ENCODE measurements at regions of chr20 and their contacts with region 1.

Region 1: DNA sequence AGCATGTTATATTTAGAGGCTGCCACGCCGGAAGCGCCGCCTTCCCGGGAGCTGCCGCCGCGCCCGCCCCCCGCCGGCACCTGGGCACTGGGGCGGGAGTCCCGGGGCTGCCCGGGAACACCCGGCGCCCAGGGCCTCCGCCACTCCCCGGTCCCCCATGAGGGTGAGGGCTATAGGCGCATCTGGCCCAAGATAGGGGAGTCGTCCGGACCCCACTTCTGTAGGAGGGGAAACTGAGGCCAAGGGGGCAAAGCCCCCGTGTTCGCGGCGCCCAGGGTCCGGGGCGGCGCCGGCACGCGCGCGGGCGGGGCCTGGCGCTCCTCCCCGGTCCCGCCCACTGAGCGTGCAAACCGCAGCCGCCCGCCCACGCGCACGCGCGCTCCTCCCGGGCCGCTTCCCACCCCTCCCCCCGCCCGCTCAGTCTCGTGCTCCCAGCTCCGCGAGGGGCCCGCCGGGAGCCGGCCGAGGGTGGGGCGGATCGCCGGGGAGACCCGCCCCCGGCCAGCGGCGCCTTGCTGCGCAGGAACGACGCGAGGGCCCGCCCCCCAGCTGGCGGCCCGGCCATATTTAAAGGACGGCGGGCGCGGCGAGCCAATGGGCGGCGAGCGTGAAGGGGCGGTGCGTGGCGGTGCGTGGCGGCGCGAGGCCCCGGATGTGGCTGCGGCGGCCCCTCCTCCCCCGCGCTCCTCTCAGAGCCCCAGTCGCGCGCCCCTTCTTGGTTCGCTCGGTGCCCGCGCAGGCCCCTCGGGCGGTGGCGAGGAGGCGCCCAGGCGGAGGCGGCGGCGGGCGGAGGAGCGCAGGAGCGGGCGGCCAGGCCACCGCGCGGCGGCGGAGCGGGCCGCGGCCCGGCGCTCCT is at the start of gene LSM14B:
- DNase-seq: peak; percentile 97 to 98
- ATAC-seq: peak; percentile 96
- H3K4me3 ChIP-seq: peak within 1 kb of the TSS; percentile 85 to 87
- H3K27ac ChIP-seq: peak within 1 kb of the TSS; percentile 14 to 90
- H3K4me1 ChIP-seq: peaks cover 0 to 2% of the 10 kb centered on the region in 2 donors
- H3K27me3 ChIP-seq: no peaks in the 10 kb centered on the region
- total RNA-seq, gene LSM14B: 25.0 to 29.5 TPM

Region 2: DNA sequence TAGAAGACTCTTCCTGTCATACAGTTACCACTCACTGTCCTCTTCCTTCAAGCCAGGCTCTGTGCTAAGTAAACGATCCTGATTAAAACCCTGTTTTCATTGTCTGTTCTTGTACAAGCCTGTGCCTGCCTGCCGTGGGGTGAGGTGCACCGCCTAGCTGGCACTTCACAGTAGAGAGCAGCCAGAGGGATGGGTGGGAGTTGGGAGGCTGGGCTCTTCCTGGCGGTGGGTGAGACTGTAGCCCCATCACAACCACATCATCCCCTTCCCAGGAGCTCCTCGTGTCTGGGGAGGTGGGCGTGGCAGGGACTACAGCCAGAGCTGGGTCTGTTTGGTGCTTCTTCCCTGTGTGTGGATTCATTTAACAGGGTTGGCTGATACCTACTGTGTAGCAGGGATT is 438.3 kb before region 1 on chr20:
- intact Hi-C with region 1: no loop called
- DNase-seq: no peak
- ATAC-seq: no peak
- H3K4me3 ChIP-seq: no peak overlapping the region
- H3K27ac ChIP-seq: no peak overlapping the region
- H3K4me1 ChIP-seq: no peaks in the 10 kb centered on the region
- H3K27me3 ChIP-seq: no peaks in the 10 kb centered on the region

Region 3: GRCh38 chr20:62025832-62026563 is 96.0 kb before region 1 on chr20:
- intact Hi-C with region 1: loop called in 1 of 2 experiments (anchors 5 kb)
- DNase-seq: peak in 1 of 2 donors; percentile 43
- ATAC-seq: peak; percentile 56
- H3K4me3 ChIP-seq: no peak overlapping the region
- H3K27ac ChIP-seq: no peak overlapping the region
- H3K4me1 ChIP-seq: no peaks in the 10 kb centered on the region
- H3K27me3 ChIP-seq: no peaks in the 10 kb centered on the region

Region 4: DNA sequence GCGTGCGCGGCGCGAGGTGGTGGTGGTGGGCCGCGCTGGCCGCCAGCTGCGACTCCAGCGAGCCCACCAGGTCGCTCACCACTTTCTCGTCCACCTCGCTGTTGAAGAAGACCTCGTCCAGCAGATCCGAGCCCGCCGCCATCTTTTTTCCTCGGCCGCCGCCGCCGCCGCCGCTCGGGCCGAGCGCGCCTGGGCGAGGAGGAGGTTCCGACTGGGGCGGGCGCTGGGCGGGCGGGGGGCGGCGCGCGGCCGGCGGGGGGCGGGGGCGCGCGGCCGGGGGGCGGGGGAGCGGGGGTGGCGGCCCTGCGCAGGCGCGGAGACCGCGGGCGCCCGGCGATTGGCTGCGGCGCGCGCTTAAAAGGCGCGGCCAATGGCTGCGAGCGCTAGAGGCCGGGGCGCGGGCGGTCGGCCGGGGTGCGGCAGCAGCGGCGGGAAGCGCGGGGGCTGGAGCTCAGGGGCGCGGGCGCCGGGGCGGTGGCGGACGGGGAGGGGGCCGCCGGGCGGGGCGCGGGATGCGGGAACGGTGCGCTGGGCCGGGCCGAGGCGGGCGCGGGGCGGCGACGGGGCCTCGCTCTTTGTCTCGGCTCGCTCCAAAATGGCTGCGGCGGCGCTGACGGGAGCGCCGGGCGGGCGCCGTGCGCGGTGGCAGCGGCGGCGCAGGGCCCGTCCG is 56.2 kb before region 1 on chr20 and contains the start of gene TAF4:
- intact Hi-C with region 1: loop called (anchors 1 to 2 kb)
- DNase-seq: peak; percentile 86 to 93
- ATAC-seq: peak; percentile 83
- H3K4me3 ChIP-seq: peak within 1 kb of the TSS; percentile 90 to 94
- H3K27ac ChIP-seq: peak within 1 kb of the TSS; percentile 72 to 83
- H3K4me1 ChIP-seq: no peaks in the 10 kb centered on the region
- H3K27me3 ChIP-seq: peaks cover 0 to 2% of the 10 kb centered on the region in 2 donors
- total RNA-seq, gene TAF4: 13.2 to 19.5 TPM